ENCODE measurements at regions of chr17 and their contacts with region 1.

Region 1: DNA sequence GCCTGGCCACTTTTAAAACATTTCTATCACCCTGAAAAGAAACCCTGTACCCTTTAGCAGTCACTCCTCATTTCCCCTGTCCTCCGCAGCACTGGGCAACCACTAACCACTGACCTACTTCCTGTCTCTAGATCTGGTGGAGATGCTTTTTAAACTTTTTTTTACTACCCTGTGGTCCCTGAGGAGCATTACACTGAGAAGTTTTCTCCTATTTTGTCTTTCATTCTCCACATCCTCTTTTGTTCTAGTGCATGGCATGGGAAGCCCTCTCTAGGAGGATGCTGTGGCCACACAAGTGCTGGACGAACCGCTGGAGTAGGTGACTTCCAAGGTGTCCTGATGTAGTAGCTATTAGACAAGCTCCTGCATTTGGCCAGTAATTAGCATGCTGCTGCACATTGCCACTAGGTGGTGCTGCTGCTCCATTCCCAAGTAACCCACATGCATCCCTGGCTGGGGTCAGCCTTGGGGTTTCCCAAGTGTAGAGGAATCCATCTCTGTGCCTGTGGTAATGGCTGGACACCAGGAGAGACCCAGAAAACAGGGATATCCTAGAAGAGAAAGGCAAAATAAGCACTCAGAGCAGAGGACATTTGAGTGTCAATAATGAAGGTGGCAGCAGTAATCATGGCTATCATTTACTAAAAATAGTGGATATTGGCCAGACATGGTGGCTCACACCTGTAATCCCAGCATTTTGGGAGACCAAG is 143.8 kb upstream of the CRHR1 start:
- DNase-seq: peak; percentile 84
- ATAC-seq: peak; percentile 80
- H3K4me3 Mint-ChIP-seq: no peak overlapping the region
- H3K27ac Mint-ChIP-seq: peak overlapping the region; percentile 40
- H3K4me1 Mint-ChIP-seq: peaks cover 4% of the 10 kb centered on the region
- H3K27me3 Mint-ChIP-seq: no peaks in the 10 kb centered on the region

Region 2: DNA sequence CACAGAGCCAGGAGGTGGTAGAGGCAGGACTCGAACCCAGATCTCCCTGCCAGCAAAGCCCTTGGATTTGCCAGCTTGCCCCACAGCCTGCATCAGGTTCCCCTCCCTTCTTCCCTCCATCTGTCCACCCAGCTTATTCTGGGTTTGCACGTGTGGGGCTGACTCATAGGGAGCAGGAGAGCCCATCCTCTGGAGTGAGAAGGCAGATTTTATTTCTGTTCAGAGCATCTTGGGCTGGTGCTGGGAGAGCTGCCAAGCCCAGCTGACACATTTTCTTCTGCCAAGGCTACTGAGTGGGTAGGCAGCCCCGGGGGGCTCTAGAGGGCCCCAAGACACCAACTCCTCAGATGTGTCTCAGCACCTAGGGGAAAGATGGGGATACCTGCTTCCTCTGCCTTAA is 37.5 kb after region 1 on chr17:
- CTCF ChIA-PET with region 1: no interaction called
- POLR2A ChIA-PET with region 1: no interaction called
- intact Hi-C with region 1: no loop called
- DNase-seq: no peak
- ATAC-seq: no peak
- H3K4me3 Mint-ChIP-seq: no peak overlapping the region
- H3K27ac Mint-ChIP-seq: no peak overlapping the region
- H3K4me1 Mint-ChIP-seq: no peaks in the 10 kb centered on the region
- H3K27me3 Mint-ChIP-seq: peaks cover 8% of the 10 kb centered on the region

Region 3: DNA sequence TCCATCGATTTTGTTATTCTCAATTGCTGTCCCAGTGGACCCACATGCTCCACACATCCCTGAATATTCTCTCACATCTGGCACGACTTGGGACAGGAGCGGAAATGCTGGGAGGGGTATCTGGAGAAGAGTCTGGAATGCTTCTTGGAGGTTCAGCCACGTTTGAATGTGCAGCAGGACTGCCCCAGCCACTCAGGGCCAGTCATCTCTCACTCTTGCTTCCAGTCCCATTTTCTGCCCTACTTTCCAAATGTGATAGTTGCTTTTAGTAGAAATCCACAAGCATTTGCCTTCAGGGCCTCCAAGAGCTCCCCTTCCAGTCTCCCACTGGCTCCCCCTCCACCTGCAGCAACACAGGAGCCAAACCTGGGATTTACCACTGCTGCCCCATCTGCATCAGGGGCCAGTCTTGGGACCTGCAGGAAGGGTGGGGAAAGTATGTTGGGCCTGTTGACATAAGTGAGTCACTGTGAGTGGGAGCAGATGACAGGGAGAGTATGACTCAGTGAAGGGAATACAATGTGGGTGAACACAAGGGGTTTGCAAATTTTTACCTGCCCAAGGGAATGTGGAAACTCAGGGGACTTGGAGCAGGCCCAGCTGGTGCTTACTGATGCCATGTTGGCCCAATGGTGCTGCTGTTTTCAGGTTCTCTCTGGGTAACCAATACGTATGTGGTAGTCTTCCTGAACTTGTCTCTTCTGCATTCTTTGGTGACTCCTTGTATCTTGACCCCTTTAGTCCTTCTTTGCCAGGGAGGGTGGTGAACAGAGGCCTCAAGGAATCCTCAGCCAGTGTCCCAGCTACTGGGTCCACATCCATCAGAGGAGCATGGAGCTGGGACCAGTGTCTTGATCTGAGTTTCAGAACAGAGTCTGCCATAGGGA is 65.1 kb after region 1 on chr17:
- CTCF ChIA-PET with region 1: no interaction called
- POLR2A ChIA-PET with region 1: no interaction called
- intact Hi-C with region 1: no loop called
- DNase-seq: peak; percentile 30
- ATAC-seq: peak; percentile 81
- H3K4me3 Mint-ChIP-seq: no peak overlapping the region
- H3K27ac Mint-ChIP-seq: no peak overlapping the region
- H3K4me1 Mint-ChIP-seq: peaks cover 11% of the 10 kb centered on the region
- H3K27me3 Mint-ChIP-seq: peaks cover 27% of the 10 kb centered on the region

Region 4: GRCh38 chr17:45828628-45829027 is 188.3 kb after region 1 on chr17:
- CTCF ChIA-PET with region 1: interaction called, 48 read pairs
- POLR2A ChIA-PET with region 1: interaction called, 3 read pairs
- intact Hi-C with region 1: loop called (anchors 1 kb)
- DNase-seq: no peak
- ATAC-seq: no peak
- H3K4me3 Mint-ChIP-seq: no peak overlapping the region
- H3K27ac Mint-ChIP-seq: no peak overlapping the region
- H3K4me1 Mint-ChIP-seq: no peaks in the 10 kb centered on the region
- H3K27me3 Mint-ChIP-seq: no peaks in the 10 kb centered on the region